Esophagus muscularis mucosa (tissue), 4 donors: ENCODE measurements at regions of chr17 and their contacts with region 1.

Region 1: GRCh38 chr17:29148790-29149430 is 31.3 kb downstream of the MYO18A start:
- DNase-seq: peak; percentile 98
- H3K4me3 ChIP-seq: peak overlapping the region; percentile 57 to 63 (median 58)
- H3K27ac ChIP-seq: peak overlapping the region; percentile 80 to 87 (median 80)
- H3K4me1 ChIP-seq: peaks cover 32 to 57% (median 47%) of the 10 kb centered on the region in 4 donors
- H3K27me3 ChIP-seq: no peaks in the 10 kb centered on the region
- CTCF ChIP-seq: peak; percentile 97 to 99 (median 98)
- EP300 ChIP-seq: no peak
- POLR2A ChIP-seq: no peak

Region 2: GRCh38 chr17:29219378-29220047 is 70.6 kb after region 1 on chr17:
- intact Hi-C with region 1: loop called (anchors 2 kb)
- DNase-seq: no peak
- H3K4me3 ChIP-seq: no peak overlapping the region
- H3K27ac ChIP-seq: no peak overlapping the region
- H3K4me1 ChIP-seq: peaks cover 0 to 9% (median 8%) of the 10 kb centered on the region in 4 donors
- H3K27me3 ChIP-seq: no peaks in the 10 kb centered on the region
- CTCF ChIP-seq: peak in 2 of 3 experiments; percentile 93 to 95
- EP300 ChIP-seq: no peak
- POLR2A ChIP-seq: no peak

Region 3: DNA sequence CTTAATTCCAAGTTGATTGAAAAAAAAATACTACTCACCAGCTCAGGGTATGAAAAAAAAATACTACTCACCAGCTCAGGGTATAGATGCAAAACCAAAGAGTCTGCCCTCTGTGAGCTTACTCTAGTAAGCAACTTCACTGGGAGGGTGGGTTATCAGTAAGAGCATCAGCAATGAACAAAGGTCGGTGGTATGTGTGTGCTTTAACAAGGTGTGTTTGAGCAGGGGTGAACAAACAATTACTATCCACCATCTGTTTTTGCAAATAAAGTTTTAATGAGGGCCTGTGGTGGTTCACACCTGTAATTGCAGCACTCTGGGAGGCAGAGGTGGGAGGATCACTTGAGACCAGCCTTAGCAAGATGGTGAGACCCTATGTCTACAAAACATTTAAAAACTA is 125.0 kb after region 1 on chr17:
- intact Hi-C with region 1: no loop called
- DNase-seq: no peak
- H3K4me3 ChIP-seq: no peak overlapping the region
- H3K27ac ChIP-seq: no peak overlapping the region
- H3K4me1 ChIP-seq: peaks cover 40 to 78% (median 72%) of the 10 kb centered on the region in 4 donors
- H3K27me3 ChIP-seq: no peaks in the 10 kb centered on the region
- CTCF ChIP-seq: no peak
- EP300 ChIP-seq: no peak
- POLR2A ChIP-seq: no peak